ENCODE measurements at regions of chr18 and their contacts with region 1.

Region 1: GRCh38 chr18:58321986-58322385 is 278.0 kb downstream of the NEDD4L start:
- DNase-seq: peak; percentile 91
- H3K4me3 Mint-ChIP-seq: peak overlapping the region; percentile 50
- H3K27ac Mint-ChIP-seq: peak overlapping the region; percentile 85
- H3K4me1 Mint-ChIP-seq: peaks cover 14% of the 10 kb centered on the region
- H3K27me3 Mint-ChIP-seq: no peaks in the 10 kb centered on the region
- CTCF ChIP-seq: peak; percentile 48

Region 2: GRCh38 chr18:58024139-58024538 is 297.8 kb before region 1 on chr18:
- CTCF ChIA-PET with region 1: no interaction called
- POLR2A ChIA-PET with region 1: no interaction called
- intact Hi-C with region 1: no loop called
- DNase-seq: no peak
- H3K4me3 Mint-ChIP-seq: no peak overlapping the region
- H3K27ac Mint-ChIP-seq: no peak overlapping the region
- H3K4me1 Mint-ChIP-seq: no peaks in the 10 kb centered on the region
- H3K27me3 Mint-ChIP-seq: no peaks in the 10 kb centered on the region
- CTCF ChIP-seq: no peak

Region 3: GRCh38 chr18:58128381-58129374 is 193.3 kb before region 1 on chr18:
- CTCF ChIA-PET with region 1: interaction called, 3 read pairs
- POLR2A ChIA-PET with region 1: no interaction called
- intact Hi-C with region 1: loop called (anchors 5 kb)
- DNase-seq: no peak
- H3K4me3 Mint-ChIP-seq: no peak overlapping the region
- H3K27ac Mint-ChIP-seq: no peak overlapping the region
- H3K4me1 Mint-ChIP-seq: no peaks in the 10 kb centered on the region
- H3K27me3 Mint-ChIP-seq: no peaks in the 10 kb centered on the region
- CTCF ChIP-seq: no peak

Region 4: DNA sequence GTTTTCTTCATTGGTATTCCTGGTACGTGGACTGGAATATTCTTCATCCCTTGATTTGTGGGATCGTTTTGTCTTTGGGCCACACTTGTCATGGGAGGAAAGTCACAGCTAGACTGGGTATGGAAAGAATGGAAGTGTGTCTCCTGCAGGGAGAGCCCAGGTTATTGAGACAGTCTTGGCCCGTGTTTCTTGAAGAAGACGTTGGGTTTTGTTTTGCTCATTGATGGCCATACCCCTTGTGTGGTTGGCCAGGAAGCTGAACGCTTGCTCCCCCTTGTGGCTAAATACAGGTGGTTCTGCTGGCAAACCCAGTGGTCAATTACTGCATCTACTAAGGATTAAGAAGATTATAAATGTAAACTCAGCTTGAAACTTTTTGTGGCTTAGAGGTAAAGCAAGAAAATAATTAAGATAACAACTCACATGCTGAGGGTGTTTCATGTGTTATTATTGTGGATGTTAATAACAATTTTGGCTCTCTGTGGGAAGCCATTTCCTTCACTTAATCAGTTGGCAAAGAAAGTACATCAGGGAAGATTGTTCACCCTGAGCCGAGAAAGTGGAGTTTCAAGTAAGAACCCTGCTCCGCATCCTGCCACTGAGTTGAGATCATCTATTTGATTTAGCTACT is 186.2 kb before region 1 on chr18:
- CTCF ChIA-PET with region 1: interaction called, 4 read pairs
- POLR2A ChIA-PET with region 1: no interaction called
- intact Hi-C with region 1: loop called (anchors 1 kb)
- DNase-seq: peak; percentile 85
- H3K4me3 Mint-ChIP-seq: no peak overlapping the region
- H3K27ac Mint-ChIP-seq: no peak overlapping the region
- H3K4me1 Mint-ChIP-seq: peaks cover 3% of the 10 kb centered on the region
- H3K27me3 Mint-ChIP-seq: no peaks in the 10 kb centered on the region
- CTCF ChIP-seq: peak; percentile 64

Region 5: GRCh38 chr18:58186258-58186948 is 135.6 kb before region 1 on chr18:
- CTCF ChIA-PET with region 1: interaction called, 5 read pairs
- POLR2A ChIA-PET with region 1: interaction called, 7 read pairs
- intact Hi-C with region 1: loop called (anchors 2 kb)
- DNase-seq: peak; percentile 80
- H3K4me3 Mint-ChIP-seq: peak overlapping the region; percentile 39
- H3K27ac Mint-ChIP-seq: peak overlapping the region; percentile 79
- H3K4me1 Mint-ChIP-seq: peaks cover 25% of the 10 kb centered on the region
- H3K27me3 Mint-ChIP-seq: no peaks in the 10 kb centered on the region
- CTCF ChIP-seq: no peak

Region 6: GRCh38 chr18:58263055-58263957 is 58.7 kb before region 1 on chr18:
- CTCF ChIA-PET with region 1: interaction called, 12 read pairs
- POLR2A ChIA-PET with region 1: interaction called, 9 read pairs
- intact Hi-C with region 1: no loop called
- DNase-seq: peak; percentile 56
- H3K4me3 Mint-ChIP-seq: peak overlapping the region; percentile 77
- H3K27ac Mint-ChIP-seq: peak overlapping the region; percentile 86
- H3K4me1 Mint-ChIP-seq: peaks cover 33% of the 10 kb centered on the region
- H3K27me3 Mint-ChIP-seq: no peaks in the 10 kb centered on the region
- CTCF ChIP-seq: no peak

Region 7: GRCh38 chr18:58288922-58289797 is 32.8 kb before region 1 on chr18:
- CTCF ChIA-PET with region 1: interaction called, 4 read pairs
- POLR2A ChIA-PET with region 1: interaction called, 378 read pairs
- intact Hi-C with region 1: no loop called
- DNase-seq: peak; percentile 80
- H3K4me3 Mint-ChIP-seq: peak overlapping the region; percentile 29
- H3K27ac Mint-ChIP-seq: peak overlapping the region; percentile 94
- H3K4me1 Mint-ChIP-seq: peaks cover 55% of the 10 kb centered on the region
- H3K27me3 Mint-ChIP-seq: no peaks in the 10 kb centered on the region
- CTCF ChIP-seq: no peak